ENCODE measurements at regions of chr6 and their contacts with region 1.

Region 1: GRCh38 chr6:149094156-149094555 is 223.4 kb upstream of the TAB2 start:
- DNase-seq: no peak
- ATAC-seq: no peak
- H3K4me3 Mint-ChIP-seq: peak overlapping the region; percentile 64
- H3K27ac Mint-ChIP-seq: peak overlapping the region; percentile 86
- H3K4me1 Mint-ChIP-seq: peaks cover 63% of the 10 kb centered on the region
- H3K27me3 Mint-ChIP-seq: no peaks in the 10 kb centered on the region

Region 2: GRCh38 chr6:149129371-149130077 is 35.4 kb after region 1 on chr6:
- POLR2A ChIA-PET with region 1: interaction called, 44 read pairs
- DNase-seq: no peak
- ATAC-seq: no peak
- H3K4me3 Mint-ChIP-seq: no peak overlapping the region
- H3K27ac Mint-ChIP-seq: peak overlapping the region; percentile 90
- H3K4me1 Mint-ChIP-seq: peaks cover 57% of the 10 kb centered on the region
- H3K27me3 Mint-ChIP-seq: no peaks in the 10 kb centered on the region

Region 3: GRCh38 chr6:149140137-149140909 is 46.2 kb after region 1 on chr6:
- POLR2A ChIA-PET with region 1: interaction called, 24 read pairs
- DNase-seq: peak; percentile 57
- ATAC-seq: peak; percentile 65
- H3K4me3 Mint-ChIP-seq: peak overlapping the region; percentile 86
- H3K27ac Mint-ChIP-seq: peak overlapping the region; percentile 99
- H3K4me1 Mint-ChIP-seq: peaks cover 36% of the 10 kb centered on the region
- H3K27me3 Mint-ChIP-seq: no peaks in the 10 kb centered on the region

Region 4: GRCh38 chr6:149147938-149148718 is 54.0 kb after region 1 on chr6:
- POLR2A ChIA-PET with region 1: interaction called, 13 read pairs
- DNase-seq: no peak
- ATAC-seq: peak; percentile 69
- H3K4me3 Mint-ChIP-seq: peak overlapping the region; percentile 39
- H3K27ac Mint-ChIP-seq: peak overlapping the region; percentile 87
- H3K4me1 Mint-ChIP-seq: peaks cover 64% of the 10 kb centered on the region
- H3K27me3 Mint-ChIP-seq: no peaks in the 10 kb centered on the region